Activated CD4-positive, alpha-beta T cell treated with anti-CD3 and anti-CD28 coated beads, Interleukin-2, amount 10 ng/mL, durations not matched to agents 24 days and 14 days (primary cell): ENCODE measurements at regions of chr7 and their contacts with region 1.

Region 1: GRCh38 chr7:83936056-83936708 is 258.4 kb downstream of the SEMA3A start:
- DNase-seq: peak; percentile 84
- H3K4me3 Mint-ChIP-seq: no peak overlapping the region
- H3K27ac Mint-ChIP-seq: no peak overlapping the region
- H3K4me1 Mint-ChIP-seq: no peaks in the 10 kb centered on the region
- H3K27me3 Mint-ChIP-seq: no peaks in the 10 kb centered on the region

Region 2: GRCh38 chr7:85023045-85023712 is 1087.0 kb after region 1 on chr7:
- intact Hi-C with region 1: loop called (anchors 1 kb)
- DNase-seq: peak; percentile 77
- H3K4me3 Mint-ChIP-seq: no peak overlapping the region
- H3K27ac Mint-ChIP-seq: no peak overlapping the region
- H3K4me1 Mint-ChIP-seq: no peaks in the 10 kb centered on the region
- H3K27me3 Mint-ChIP-seq: no peaks in the 10 kb centered on the region